B cell (primary cell): ENCODE measurements at regions of chr17 and their contacts with region 1.

Region 1: DNA sequence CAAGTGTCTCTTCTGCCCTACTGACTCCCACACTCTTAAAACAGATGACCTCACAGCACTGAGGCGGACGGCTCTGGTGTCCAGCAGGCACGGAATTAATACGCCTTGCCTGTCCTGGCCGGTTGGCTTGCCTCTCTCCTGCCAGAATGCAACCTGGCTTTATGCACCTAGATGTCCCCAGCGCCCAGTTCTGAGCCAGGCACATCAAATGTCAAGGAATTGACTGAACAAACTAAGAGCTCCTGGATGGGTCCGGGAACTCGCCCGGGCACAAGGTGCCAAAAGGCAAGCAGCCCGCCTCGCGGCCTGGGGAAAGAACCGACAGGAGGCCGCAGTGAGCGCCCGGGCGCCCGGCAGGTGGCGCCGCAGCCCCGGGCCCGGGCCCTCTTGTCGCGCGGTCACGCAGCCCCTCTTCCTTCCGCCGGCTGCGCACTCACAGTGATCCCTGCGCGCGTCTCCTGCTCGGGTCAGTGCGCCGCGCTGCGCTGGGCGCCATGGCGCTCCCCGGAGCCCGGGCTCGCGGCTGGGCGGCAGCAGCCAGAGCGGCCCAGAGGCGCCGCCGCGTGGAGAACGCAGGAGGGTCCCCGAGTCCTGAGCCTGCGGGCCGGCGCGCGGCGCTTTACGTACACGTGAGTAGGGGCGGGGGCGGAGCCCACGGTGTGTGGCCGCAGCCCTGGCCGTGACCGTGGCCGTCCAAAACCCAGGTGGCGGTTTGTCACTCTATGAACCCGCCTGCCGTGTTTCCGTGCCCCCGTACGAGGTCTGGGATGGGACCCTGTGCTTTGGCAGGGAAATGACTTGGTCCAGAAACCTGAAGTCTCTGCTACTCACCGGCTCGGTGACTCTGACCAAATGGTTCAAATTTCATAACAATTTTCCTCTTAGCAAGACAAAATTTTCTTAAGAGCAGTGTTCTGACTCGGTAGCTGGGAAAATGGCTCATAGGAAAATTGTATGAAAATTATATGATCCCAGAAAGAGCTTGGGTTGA is at the start of gene RSAD1:
- DNase-seq: peak; percentile 95
- ATAC-seq: peak; percentile 90
- H3K4me3 ChIP-seq: peak within 1 kb of the TSS; percentile 78 to 93 (median 91)
- H3K4me3 Mint-ChIP-seq: peak within 1 kb of the TSS; percentile 92
- H3K27ac ChIP-seq: peak within 1 kb of the TSS; percentile 69 to 86
- H3K27ac Mint-ChIP-seq: peak within 1 kb of the TSS; percentile 91
- H3K4me1 ChIP-seq: peaks cover 13 to 22% of the 10 kb centered on the region in 2 donors
- H3K4me1 Mint-ChIP-seq: peaks cover 26% of the 10 kb centered on the region
- H3K27me3 ChIP-seq: peaks cover 0 to 7% (median 0%) of the 10 kb centered on the region in 4 experiments
- H3K27me3 Mint-ChIP-seq: peaks cover 3% of the 10 kb centered on the region
- CTCF ChIP-seq: peak; percentile 95
- total RNA-seq, gene RSAD1: 52.9 and 53.4 TPM in 2 replicates

Region 2: DNA sequence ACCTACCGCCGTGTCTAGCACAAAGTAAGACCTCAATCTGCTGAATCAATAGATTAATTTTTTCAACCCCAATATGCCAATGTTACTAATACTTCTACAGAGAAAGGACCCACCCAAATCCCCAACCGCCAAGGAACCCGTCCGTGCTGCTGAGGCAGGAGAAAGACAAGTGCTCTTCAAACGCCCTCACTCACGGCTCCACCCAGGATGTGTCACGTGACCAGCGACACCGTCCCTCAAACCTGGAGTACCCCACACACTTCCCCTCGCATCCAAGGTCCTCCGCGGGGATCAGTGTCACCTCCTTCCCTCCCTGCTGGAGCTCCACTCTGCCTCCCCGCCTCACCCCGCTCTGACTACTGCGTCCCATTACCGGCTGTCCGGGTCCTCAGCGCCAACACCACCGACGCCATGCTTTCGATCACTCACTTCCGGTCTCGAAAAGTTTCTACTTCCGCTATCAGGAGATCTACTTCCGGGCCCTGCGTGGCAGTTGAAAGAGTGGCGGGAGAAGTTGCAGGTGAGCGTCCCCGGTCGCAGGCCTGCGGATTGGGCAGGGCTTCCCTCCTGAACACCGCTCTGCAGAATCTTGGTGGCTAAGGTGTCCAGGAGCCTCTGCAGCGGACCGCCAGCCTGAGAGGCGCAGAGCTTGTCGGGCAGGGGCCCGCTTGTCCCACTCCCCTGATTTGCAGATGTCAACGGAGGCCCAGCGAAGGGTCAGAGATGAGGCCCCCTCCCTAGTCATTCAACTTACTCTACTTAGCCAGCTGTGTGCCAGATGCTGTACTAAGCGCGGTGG is 105.7 kb before region 1 on chr17 and contains the starts of genes EME1 and MRPL27:
- CTCF ChIA-PET with region 1: interaction called, 4 read pairs
- POLR2A ChIA-PET with region 1: interaction called, 4 read pairs
- intact Hi-C with region 1: loop called (anchors 1 kb)
- DNase-seq: peak; percentile 96
- ATAC-seq: peak; percentile 88
- H3K4me3 ChIP-seq: peak within 1 kb of the TSS; percentile 65 to 85 (median 81)
- H3K4me3 Mint-ChIP-seq: peak within 1 kb of the TSS; percentile 100
- H3K27ac ChIP-seq: peak within 1 kb of the TSS; percentile 91 to 96
- H3K27ac Mint-ChIP-seq: peak within 1 kb of the TSS; percentile 100
- H3K4me1 ChIP-seq: peaks cover 14 to 19% of the 10 kb centered on the region in 2 donors
- H3K4me1 Mint-ChIP-seq: peaks cover 23% of the 10 kb centered on the region
- H3K27me3 ChIP-seq: no peaks in the 10 kb centered on the region
- H3K27me3 Mint-ChIP-seq: no peaks in the 10 kb centered on the region
- CTCF ChIP-seq: no peak
- total RNA-seq, gene EME1: 2.3 and 3.4 TPM in 2 replicates
- total RNA-seq, gene MRPL27: 33.5 and 40.2 TPM in 2 replicates

Region 3: GRCh38 chr17:50425682-50426471 is 52.8 kb before region 1 on chr17 and contains the start of gene ACSF2:
- CTCF ChIA-PET with region 1: interaction called, 4 read pairs
- POLR2A ChIA-PET with region 1: interaction called, 3 read pairs
- intact Hi-C with region 1: loop called (anchors 1 kb)
- DNase-seq: peak; percentile 79
- ATAC-seq: peak; percentile 81
- H3K4me3 ChIP-seq: peak within 1 kb of the TSS; percentile 32 to 82 (median 70)
- H3K4me3 Mint-ChIP-seq: peak within 1 kb of the TSS; percentile 94
- H3K27ac ChIP-seq: peak within 1 kb of the TSS; percentile 41 to 46
- H3K27ac Mint-ChIP-seq: peak within 1 kb of the TSS; percentile 93
- H3K4me1 ChIP-seq: peaks cover 27 to 41% of the 10 kb centered on the region in 2 donors
- H3K4me1 Mint-ChIP-seq: peaks cover 51% of the 10 kb centered on the region
- H3K27me3 ChIP-seq: no peaks in the 10 kb centered on the region
- H3K27me3 Mint-ChIP-seq: no peaks in the 10 kb centered on the region
- CTCF ChIP-seq: no peak
- total RNA-seq, gene ACSF2: 66.1 and 82.6 TPM in 2 replicates

Region 4: GRCh38 chr17:50507871-50508572 is 29.3 kb after region 1 on chr17 and contains the start of gene MYCBPAP:
- CTCF ChIA-PET with region 1: interaction called, 10 read pairs
- POLR2A ChIA-PET with region 1: no interaction called
- intact Hi-C with region 1: loop called (anchors 1 kb)
- DNase-seq: peak; percentile 85
- ATAC-seq: peak; percentile 84
- H3K4me3 ChIP-seq: peak within 1 kb of the TSS; percentile 41 to 79 (median 54)
- H3K4me3 Mint-ChIP-seq: peak within 1 kb of the TSS; percentile 84
- H3K27ac ChIP-seq: peak within 1 kb of the TSS; percentile 1 to 19
- H3K27ac Mint-ChIP-seq: peak within 1 kb of the TSS; percentile 83
- H3K4me1 ChIP-seq: peaks cover 9 to 19% of the 10 kb centered on the region in 2 donors
- H3K4me1 Mint-ChIP-seq: peaks cover 28% of the 10 kb centered on the region
- H3K27me3 ChIP-seq: peaks cover 0 to 8% (median 3%) of the 10 kb centered on the region in 4 experiments
- H3K27me3 Mint-ChIP-seq: no peaks in the 10 kb centered on the region
- CTCF ChIP-seq: no peak
- total RNA-seq, gene MYCBPAP: 5.1 and 5.5 TPM in 2 replicates

Region 5: DNA sequence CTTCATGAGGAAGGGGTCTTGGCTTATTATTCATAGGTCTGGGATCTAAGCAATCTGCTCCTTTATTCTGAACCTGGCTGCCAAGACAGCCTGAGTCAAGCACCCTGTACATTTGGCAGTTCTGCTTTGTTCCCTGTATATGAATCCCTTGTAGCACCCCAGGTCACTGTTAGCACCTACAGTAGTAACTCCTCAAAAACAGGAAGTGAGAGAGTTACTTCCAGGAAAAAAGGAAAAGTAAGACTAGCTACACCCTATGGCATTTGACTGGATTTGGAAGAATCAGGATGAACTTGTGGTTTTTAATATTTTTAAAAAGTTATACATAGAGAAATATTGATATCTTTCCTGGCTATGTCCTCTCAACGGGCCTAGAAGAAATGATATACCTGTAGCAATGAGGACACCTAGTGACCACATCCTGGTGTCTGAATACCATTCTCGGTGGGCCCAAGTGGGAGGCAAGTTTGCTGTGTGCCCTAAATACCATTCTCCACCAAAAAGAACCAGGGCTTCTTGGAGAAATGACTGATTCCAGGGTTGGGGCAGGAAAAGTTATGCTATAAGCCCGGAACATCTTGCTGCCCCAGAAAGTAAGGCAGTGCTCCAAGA is 219.1 kb after region 1 on chr17:
- CTCF ChIA-PET with region 1: interaction called, 7 read pairs
- POLR2A ChIA-PET with region 1: no interaction called
- intact Hi-C with region 1: loop called (anchors 5 kb)
- DNase-seq: no peak
- ATAC-seq: no peak
- H3K4me3 ChIP-seq: no peak overlapping the region
- H3K4me3 Mint-ChIP-seq: no peak overlapping the region
- H3K27ac ChIP-seq: no peak overlapping the region
- H3K27ac Mint-ChIP-seq: no peak overlapping the region
- H3K4me1 ChIP-seq: no peaks in the 10 kb centered on the region
- H3K4me1 Mint-ChIP-seq: peaks cover 9% of the 10 kb centered on the region
- H3K27me3 ChIP-seq: no peaks in the 10 kb centered on the region
- H3K27me3 Mint-ChIP-seq: no peaks in the 10 kb centered on the region
- CTCF ChIP-seq: no peak